SK-N-SH (cell line): ENCODE measurements at regions of chr5 and their contacts with region 1.

Region 1: DNA sequence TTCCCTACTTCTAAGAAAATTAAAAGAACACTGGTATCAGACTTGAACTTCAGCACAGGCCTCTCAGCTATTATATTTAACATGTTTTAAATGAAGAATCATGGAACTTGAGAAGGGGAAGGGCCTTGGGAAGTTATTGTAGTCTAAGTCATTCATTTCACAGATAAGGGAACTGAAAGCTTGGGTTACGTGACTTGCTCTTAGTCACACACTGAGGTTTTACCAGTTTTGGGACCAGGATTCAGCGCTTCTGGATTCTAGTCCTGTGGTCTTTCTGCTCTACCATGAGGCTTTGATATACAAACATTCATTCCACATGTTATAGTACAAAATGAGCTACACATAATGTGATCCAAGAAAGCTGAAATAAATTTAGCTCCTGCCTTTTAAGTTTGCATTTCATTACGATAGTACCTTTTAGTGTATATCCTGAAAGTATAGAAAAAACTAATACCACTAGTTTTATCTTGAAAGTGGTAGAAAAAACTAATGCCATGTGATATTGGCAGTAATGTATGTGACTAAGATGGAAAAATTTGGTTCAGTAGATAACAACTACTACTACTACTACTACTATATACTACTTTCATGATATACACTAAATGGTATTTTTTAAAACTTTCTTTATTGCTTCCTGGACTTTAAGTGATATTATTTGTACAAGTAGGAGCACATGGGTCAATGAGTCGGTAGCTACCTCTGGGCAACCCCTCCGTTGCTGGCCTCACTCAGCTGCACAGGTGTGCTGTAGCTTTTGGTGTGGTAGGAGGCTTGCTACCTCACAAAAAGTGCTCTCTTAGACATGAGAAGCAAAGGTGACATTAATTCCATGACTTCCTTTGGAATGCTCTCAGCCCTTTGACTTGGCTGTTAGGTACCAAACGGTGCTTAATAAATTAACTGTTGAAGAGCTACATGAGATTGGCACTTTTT is 40.7 kb downstream of the F2RL2 start:
- DNase-seq: no peak
- H3K4me3 ChIP-seq: no peak overlapping the region
- H3K27ac ChIP-seq: no peak overlapping the region
- H3K4me1 ChIP-seq: no peaks in the 10 kb centered on the region; a peak in 1 of 4 replicates
- H3K27me3 ChIP-seq: no peaks in the 10 kb centered on the region
- CTCF ChIP-seq: no peak
- EP300 ChIP-seq: no peak
- RAD21 ChIP-seq: no peak

Region 2: DNA sequence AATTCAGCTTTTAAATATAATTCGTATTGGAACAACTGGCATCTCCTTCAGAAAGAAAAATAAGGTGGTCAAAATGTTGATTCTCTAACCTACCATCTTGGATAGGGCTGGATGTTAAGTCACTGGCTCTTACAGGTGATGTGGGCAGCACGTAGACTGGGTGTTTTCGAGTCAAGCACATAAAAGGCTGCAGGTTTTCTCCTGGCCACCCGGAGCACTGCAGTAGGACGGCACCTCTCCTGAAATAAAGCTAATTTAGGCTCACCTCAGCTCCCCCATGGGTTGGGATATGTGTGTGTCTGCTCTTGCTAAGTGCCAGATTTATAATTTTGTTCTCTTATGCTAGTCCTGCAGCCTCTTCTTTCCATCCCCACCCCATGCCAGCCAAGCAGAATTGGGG is 99.1 kb before region 1 on chr5:
- CTCF ChIA-PET with region 1: no interaction called
- POLR2A ChIA-PET with region 1: no interaction called
- DNase-seq: no peak
- H3K4me3 ChIP-seq: no peak overlapping the region
- H3K27ac ChIP-seq: no peak overlapping the region
- H3K4me1 ChIP-seq: no peaks in the 10 kb centered on the region; a peak in 2 of 4 replicates
- H3K27me3 ChIP-seq: no peaks in the 10 kb centered on the region
- CTCF ChIP-seq: no peak
- EP300 ChIP-seq: no peak
- RAD21 ChIP-seq: no peak

Region 3: DNA sequence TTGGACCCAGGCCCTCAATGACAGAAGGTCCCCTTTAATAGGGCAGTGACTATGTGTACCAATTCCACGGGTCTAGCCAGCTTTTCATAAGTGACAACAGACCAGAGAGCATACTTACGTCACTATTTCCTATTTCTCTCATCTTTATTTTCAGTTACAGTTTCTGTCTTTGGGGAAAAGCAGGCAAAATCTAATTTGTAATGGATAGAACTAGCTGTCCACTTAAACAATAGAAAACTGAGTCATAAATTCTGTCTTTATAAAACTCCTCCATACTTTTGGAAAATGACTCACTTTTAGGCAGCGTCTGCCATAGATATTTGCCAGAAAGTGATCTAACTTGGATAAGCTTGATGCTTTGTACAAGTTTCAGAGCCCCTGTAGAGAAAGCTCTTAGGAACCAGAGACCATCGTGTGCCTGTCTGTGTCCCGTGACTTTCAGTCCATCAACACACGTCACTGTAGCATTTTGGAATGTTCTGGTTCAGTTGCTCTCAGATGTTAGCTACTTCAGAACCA is 61.2 kb before region 1 on chr5:
- CTCF ChIA-PET with region 1: no interaction called
- POLR2A ChIA-PET with region 1: no interaction called
- DNase-seq: no peak
- H3K4me3 ChIP-seq: no peak overlapping the region
- H3K27ac ChIP-seq: peak overlapping the region; percentile 74 to 96
- H3K4me1 ChIP-seq: peaks cover 14 to 26% of the 10 kb centered on the region in 2 experiments; a peak in 3 of 4 replicates
- H3K27me3 ChIP-seq: no peaks in the 10 kb centered on the region
- CTCF ChIP-seq: no peak
- EP300 ChIP-seq: peak in 1 of 2 experiments; percentile 75; a peak in 2 of 4 replicates
- RAD21 ChIP-seq: no peak

Region 4: DNA sequence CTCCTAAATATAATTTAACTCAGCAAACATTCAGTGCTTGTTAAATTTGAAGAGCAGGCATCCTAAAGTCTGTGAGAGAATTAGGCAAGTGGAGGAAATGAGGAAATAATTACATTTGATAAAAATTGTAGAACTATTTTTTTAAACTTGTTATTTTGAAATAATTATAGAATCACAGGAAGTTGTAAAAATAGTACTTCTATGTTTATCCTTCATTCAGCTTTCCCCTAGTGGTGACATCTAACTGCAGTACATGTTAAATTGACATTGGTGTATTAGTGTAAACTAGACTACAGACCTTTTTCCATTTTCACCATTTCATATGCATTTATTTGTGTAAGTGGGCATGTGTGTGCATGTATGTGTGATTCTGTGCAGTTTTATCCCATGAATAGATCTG is 10.9 kb before region 1 on chr5:
- CTCF ChIA-PET with region 1: interaction called, 13 read pairs
- POLR2A ChIA-PET with region 1: no interaction called
- DNase-seq: no peak
- H3K4me3 ChIP-seq: no peak overlapping the region
- H3K27ac ChIP-seq: no peak overlapping the region
- H3K4me1 ChIP-seq: no peaks in the 10 kb centered on the region; a peak in 2 of 4 replicates
- H3K27me3 ChIP-seq: no peaks in the 10 kb centered on the region
- CTCF ChIP-seq: peak; percentile 36; the same call in 1 of the 2 replicates
- EP300 ChIP-seq: no peak
- RAD21 ChIP-seq: no peak